ENCODE measurements at regions of chr5 and their contacts with region 1.

Region 1: DNA sequence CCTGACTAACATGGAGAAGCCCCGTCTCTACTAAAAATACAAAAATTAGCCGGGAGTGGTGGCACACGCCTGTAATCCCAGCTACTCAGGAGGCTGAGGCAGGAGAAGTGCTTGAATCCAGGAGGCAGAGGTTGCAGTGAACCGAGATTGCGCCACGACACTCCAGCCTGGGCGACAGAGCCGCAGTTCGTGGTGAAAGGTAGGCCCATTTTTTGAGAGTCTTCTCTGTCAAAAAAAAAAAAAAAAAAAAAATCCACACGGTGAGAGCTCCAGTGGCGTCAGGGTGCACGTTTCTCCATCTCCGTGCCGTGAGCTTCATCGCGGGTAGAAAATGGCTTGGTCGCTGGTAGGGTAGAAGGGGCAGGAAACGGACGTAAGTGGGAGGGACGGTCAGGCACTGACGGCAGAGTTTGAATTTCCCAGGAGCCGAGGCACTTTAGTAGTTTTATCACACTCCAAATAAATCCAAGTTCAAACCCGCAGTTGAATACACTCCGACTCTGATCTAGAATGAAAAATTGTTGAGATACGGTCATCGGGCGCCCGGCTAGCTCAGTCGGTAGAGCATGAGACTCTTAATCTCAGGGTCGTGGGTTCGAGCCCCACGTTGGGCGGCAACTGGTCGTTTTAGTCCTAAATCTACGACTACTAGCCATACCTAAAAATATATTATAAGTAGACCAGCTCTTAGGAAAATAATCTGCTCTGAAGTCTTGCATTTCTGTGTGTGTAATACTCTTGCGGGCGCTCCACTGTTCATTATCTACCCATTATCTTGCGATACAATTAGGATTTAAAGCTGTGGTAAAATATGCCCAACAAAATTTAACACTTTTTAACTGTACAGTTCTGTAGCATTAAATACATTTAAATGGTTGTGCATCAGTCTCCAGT is 2.5 kb upstream of the TRIM7 start:
- DNase-seq: peak; percentile 94
- H3K4me3 Mint-ChIP-seq: peak overlapping the region; percentile 84
- H3K27ac Mint-ChIP-seq: peak overlapping the region; percentile 81
- H3K4me1 Mint-ChIP-seq: peaks cover 29% of the 10 kb centered on the region
- H3K27me3 Mint-ChIP-seq: no peaks in the 10 kb centered on the region
- CTCF ChIP-seq: no peak

Region 2: DNA sequence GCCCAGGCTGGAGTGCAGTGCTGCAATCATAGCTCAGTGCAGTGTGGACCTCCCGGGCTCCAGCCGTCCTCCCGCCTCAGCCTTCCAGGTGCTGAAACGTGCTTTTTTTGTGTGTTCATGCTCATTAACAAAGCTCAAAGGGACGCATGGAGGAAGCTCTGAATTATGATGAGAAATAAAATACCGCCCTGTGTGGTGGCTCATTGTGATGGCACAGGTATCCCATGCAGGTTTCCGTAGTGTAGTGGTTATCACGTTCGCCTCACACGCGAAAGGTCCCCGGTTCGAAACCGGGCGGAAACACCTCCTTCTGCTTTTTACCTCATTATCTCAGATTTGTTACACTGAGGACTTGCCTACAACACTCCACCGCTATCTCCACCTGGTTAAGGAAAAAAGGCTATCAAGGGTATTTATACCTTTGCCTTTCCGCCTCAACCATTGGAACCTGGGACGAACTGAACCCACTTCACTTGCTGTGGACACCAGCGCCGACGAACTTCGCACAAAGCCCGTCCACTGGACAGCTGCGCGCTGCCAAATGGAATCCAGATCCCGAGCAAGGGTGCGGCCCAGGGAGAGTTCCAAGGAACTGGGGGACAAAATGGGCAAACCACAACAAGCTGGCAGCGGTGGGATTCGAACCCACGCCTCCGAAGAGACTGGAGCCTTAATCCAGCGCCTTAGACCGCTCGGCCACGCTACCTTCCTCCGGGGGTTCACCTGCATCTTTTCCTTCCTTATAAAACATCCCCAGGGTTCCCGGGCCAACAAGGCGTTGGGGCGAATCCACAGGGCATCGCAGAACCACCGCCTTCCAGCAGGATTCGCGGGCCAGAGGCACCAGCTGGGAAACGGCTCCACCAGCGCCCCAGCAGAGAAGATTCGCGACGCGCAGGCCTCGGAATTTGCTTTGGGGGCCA is 33.8 kb before region 1 on chr5:
- CTCF ChIA-PET with region 1: interaction called, 4 read pairs
- POLR2A ChIA-PET with region 1: interaction called, 11 read pairs
- intact Hi-C with region 1: loop called (anchors 1 kb)
- DNase-seq: peak; percentile 87
- H3K4me3 Mint-ChIP-seq: peak overlapping the region; percentile 84
- H3K27ac Mint-ChIP-seq: peak overlapping the region; percentile 46
- H3K4me1 Mint-ChIP-seq: peaks cover 32% of the 10 kb centered on the region
- H3K27me3 Mint-ChIP-seq: no peaks in the 10 kb centered on the region
- CTCF ChIP-seq: peak; percentile 13

Region 3: GRCh38 chr5:181243512-181244343 is 36.3 kb after region 1 on chr5 and contains the start of gene RACK1:
- CTCF ChIA-PET with region 1: interaction called, 3 read pairs
- POLR2A ChIA-PET with region 1: interaction called, 40 read pairs
- intact Hi-C with region 1: no loop called
- DNase-seq: peak; percentile 96
- H3K4me3 Mint-ChIP-seq: peak within 1 kb of the TSS; percentile 99
- H3K27ac Mint-ChIP-seq: peak within 1 kb of the TSS; percentile 99
- H3K4me1 Mint-ChIP-seq: peaks cover 48% of the 10 kb centered on the region
- H3K27me3 Mint-ChIP-seq: no peaks in the 10 kb centered on the region
- CTCF ChIP-seq: no peak
- total RNA-seq, gene RACK1: 2,995 and 4,050 TPM in 2 replicates

Region 4: GRCh38 chr5:181260387-181261319 is 53.2 kb after region 1 on chr5 and contains the start of gene TRIM52:
- CTCF ChIA-PET with region 1: interaction called, 3 read pairs
- POLR2A ChIA-PET with region 1: interaction called, 52 read pairs
- intact Hi-C with region 1: no loop called
- DNase-seq: peak; percentile 91
- H3K4me3 Mint-ChIP-seq: peak within 1 kb of the TSS; percentile 86
- H3K27ac Mint-ChIP-seq: peak within 1 kb of the TSS; percentile 89
- H3K4me1 Mint-ChIP-seq: peaks cover 23% of the 10 kb centered on the region
- H3K27me3 Mint-ChIP-seq: no peaks in the 10 kb centered on the region
- CTCF ChIP-seq: no peak
- total RNA-seq, gene TRIM52: 12.5 and 16.1 TPM in 2 replicates